Heart right ventricle (tissue), 16 donors: ENCODE measurements at regions of chr19 and their contacts with region 1.

Region 1: GRCh38 chr19:10946964-10947657 is 13.7 kb upstream of the SMARCA4 start:
- DNase-seq: no peak
- ATAC-seq: no peak
- H3K4me3 ChIP-seq: no peak overlapping the region
- H3K27ac ChIP-seq: no peak overlapping the region
- H3K4me1 ChIP-seq: peaks cover 0 to 5% (median 0%) of the 10 kb centered on the region in 9 donors
- H3K27me3 ChIP-seq: no peaks in the 10 kb centered on the region
- CTCF ChIP-seq: no peak

Region 2: DNA sequence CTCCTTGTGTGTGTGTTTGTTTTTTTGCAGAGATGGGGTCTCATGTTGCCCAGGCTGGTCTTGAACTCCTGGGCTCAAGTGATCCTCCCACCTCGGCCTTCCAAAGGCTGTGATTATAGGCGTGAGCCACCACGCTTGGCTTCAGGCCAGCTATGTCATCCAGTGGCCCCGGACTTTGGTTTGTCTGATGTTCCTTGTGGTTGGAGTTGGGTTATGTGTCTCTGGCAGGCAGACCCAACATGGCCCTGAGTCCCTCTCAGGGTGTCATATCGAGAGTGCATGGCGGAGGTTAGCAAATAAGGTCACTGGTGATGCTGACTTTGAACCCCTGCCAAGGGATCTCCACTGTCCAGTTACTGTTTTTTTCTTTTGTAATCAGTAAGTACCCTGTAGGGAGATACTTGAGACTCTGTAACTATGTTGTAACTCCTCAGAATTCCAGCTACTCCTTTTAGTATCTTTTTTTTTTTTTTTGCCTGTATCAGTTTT is 51.0 kb after region 1 on chr19:
- intact Hi-C with region 1: loop called in 3 of 10 experiments (anchors 10 kb)
- DNase-seq: no peak
- ATAC-seq: peak in 1 of 8 donors; percentile 27
- H3K4me3 ChIP-seq: no peak overlapping the region
- H3K27ac ChIP-seq: no peak overlapping the region
- H3K4me1 ChIP-seq: peaks cover 0 to 8% (median 0%) of the 10 kb centered on the region in 9 donors
- H3K27me3 ChIP-seq: no peaks in the 10 kb centered on the region
- CTCF ChIP-seq: no peak

Region 3: DNA sequence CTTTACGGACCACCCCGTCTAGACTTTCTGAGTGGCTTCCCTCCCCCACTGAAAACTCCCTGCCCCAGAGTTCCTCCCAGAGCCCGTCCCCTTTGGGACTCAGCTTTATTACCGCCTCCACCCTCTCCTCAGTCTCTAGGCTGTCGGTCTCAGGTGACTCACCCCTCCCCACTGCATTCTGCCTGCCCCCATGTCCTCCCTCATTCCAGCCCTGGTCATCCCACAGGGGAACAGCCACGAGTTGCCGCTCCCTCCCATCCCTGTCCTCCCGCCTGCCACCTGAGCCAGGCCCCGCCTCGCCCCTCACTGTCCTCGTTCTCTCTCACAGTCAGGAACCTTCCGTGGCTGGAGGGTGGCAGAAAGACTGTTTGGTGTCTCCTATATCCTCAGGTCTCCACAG is 71.1 kb after region 1 on chr19:
- intact Hi-C with region 1: loop called in 1 of 10 experiments (anchors 10 kb)
- DNase-seq: no peak
- ATAC-seq: no peak
- H3K4me3 ChIP-seq: no peak overlapping the region
- H3K27ac ChIP-seq: no peak overlapping the region
- H3K4me1 ChIP-seq: peaks cover 0 to 12% (median 0%) of the 10 kb centered on the region in 9 donors
- H3K27me3 ChIP-seq: no peaks in the 10 kb centered on the region
- CTCF ChIP-seq: no peak

Region 4: GRCh38 chr19:11125994-11126685 is 179.0 kb after region 1 on chr19:
- intact Hi-C with region 1: loop called in 1 of 10 experiments (anchors 10 kb)
- DNase-seq: peak; percentile 76 to 79
- ATAC-seq: peak in 7 of 8 donors; percentile 62 to 80 (median 71)
- H3K4me3 ChIP-seq: no peak overlapping the region
- H3K27ac ChIP-seq: peak overlapping the region in 2 of 10 donors; percentile 7 to 29
- H3K4me1 ChIP-seq: peaks cover under 1 to 21% (median 9%) of the 10 kb centered on the region in 9 donors
- H3K27me3 ChIP-seq: no peaks in the 10 kb centered on the region
- CTCF ChIP-seq: peak; percentile 71 to 86 (median 79)